IMR-90 (cell line): ENCODE measurements at regions of chr14 and their contacts with region 1.

Region 1: GRCh38 chr14:49862089-49862673 is 9.6 kb upstream of the NEMF start:
- DNase-seq: peak; percentile 87
- ATAC-seq: peak; percentile 59
- H3K4me3 ChIP-seq: peak overlapping the region; percentile 60
- H3K27ac ChIP-seq: peak overlapping the region; percentile 95
- H3K4me1 ChIP-seq: peaks cover 6% of the 10 kb centered on the region
- H3K27me3 ChIP-seq: no peaks in the 10 kb centered on the region
- CTCF ChIP-seq: peak; percentile 100
- POLR2A ChIP-seq: no peak
- RAD21 ChIP-seq: peak; percentile 43

Region 2: GRCh38 chr14:49615776-49616175 is 246.4 kb before region 1 on chr14:
- CTCF ChIA-PET with region 1: no interaction called
- POLR2A ChIA-PET with region 1: no interaction called
- dilution Hi-C with region 1: no loop called
- in situ Hi-C with region 1: no loop called
- intact Hi-C with region 1: no loop called
- DNase-seq: no peak
- ATAC-seq: no peak
- H3K4me3 ChIP-seq: no peak overlapping the region
- H3K27ac ChIP-seq: no peak overlapping the region
- H3K4me1 ChIP-seq: peaks cover 7% of the 10 kb centered on the region
- H3K27me3 ChIP-seq: no peaks in the 10 kb centered on the region
- CTCF ChIP-seq: no peak
- POLR2A ChIP-seq: no peak
- RAD21 ChIP-seq: no peak

Region 3: DNA sequence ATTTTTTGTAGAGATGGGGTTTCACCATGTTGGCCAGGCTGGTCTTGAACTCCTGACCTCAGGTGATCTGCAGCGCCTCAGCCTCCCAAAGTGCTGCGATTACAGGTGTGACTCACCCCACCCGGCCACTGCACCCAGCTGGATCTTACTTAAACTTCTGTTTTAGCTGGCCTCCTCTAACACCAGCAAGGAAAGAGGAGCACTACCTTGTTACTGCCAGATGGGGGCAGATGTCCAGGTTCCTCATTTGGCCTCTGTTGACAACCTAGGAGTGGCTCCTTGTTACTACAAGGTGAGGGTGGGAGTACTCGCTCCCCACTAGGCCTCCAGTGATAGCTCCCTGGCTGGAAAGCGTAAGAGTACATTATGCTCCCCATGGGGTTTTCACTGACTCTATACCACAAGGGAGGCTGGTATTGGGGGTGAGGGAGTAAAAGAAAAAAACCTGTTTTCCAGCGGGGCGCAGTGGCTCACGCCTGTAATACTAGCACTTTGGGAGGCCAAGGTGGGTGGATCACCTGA is 17.6 kb after region 1 on chr14:
- CTCF ChIA-PET with region 1: interaction called, 11 read pairs
- POLR2A ChIA-PET with region 1: no interaction called
- dilution Hi-C with region 1: no loop called
- in situ Hi-C with region 1: no loop called
- intact Hi-C with region 1: no loop called
- DNase-seq: peak; percentile 54
- ATAC-seq: peak; percentile 79
- H3K4me3 ChIP-seq: no peak overlapping the region
- H3K27ac ChIP-seq: no peak overlapping the region
- H3K4me1 ChIP-seq: no peaks in the 10 kb centered on the region
- H3K27me3 ChIP-seq: no peaks in the 10 kb centered on the region
- CTCF ChIP-seq: peak; percentile 53
- POLR2A ChIP-seq: no peak
- RAD21 ChIP-seq: peak; percentile 54

Region 4: GRCh38 chr14:49971156-49972130 is 109.3 kb after region 1 on chr14:
- CTCF ChIA-PET with region 1: interaction called, 10 read pairs
- POLR2A ChIA-PET with region 1: no interaction called
- dilution Hi-C with region 1: loop called (anchors 25 kb)
- in situ Hi-C with region 1: no loop called
- intact Hi-C with region 1: loop called (anchors 5 kb)
- DNase-seq: peak; percentile 25
- ATAC-seq: peak; percentile 5
- H3K4me3 ChIP-seq: no peak overlapping the region
- H3K27ac ChIP-seq: peak overlapping the region; percentile 97
- H3K4me1 ChIP-seq: peaks cover 36% of the 10 kb centered on the region
- H3K27me3 ChIP-seq: no peaks in the 10 kb centered on the region
- CTCF ChIP-seq: no peak
- POLR2A ChIP-seq: no peak
- RAD21 ChIP-seq: no peak

Region 5: GRCh38 chr14:50038398-50039119 is 176.4 kb after region 1 on chr14:
- CTCF ChIA-PET with region 1: interaction called, 12 read pairs
- POLR2A ChIA-PET with region 1: no interaction called
- dilution Hi-C with region 1: no loop called
- in situ Hi-C with region 1: no loop called
- intact Hi-C with region 1: no loop called
- DNase-seq: peak; percentile 98
- ATAC-seq: peak; percentile 78
- H3K4me3 ChIP-seq: no peak overlapping the region
- H3K27ac ChIP-seq: peak overlapping the region; percentile 49
- H3K4me1 ChIP-seq: peaks cover 25% of the 10 kb centered on the region
- H3K27me3 ChIP-seq: no peaks in the 10 kb centered on the region
- CTCF ChIP-seq: peak; percentile 37
- POLR2A ChIP-seq: no peak
- RAD21 ChIP-seq: peak; percentile 50